WTC11 (cell line): ENCODE measurements at regions of chr1 and their contacts with region 1.

Region 1: GRCh38 chr1:41496080-41497055 is 11.9 kb upstream of the EDN2 start:
- DNase-seq: peak; percentile 85
- ATAC-seq: peak; percentile 65
- H3K4me3 Mint-ChIP-seq: peak overlapping the region; percentile 41
- H3K27ac Mint-ChIP-seq: no peak overlapping the region
- H3K4me1 Mint-ChIP-seq: peaks cover 24% of the 10 kb centered on the region
- H3K27me3 Mint-ChIP-seq: peaks cover 14% of the 10 kb centered on the region
- CTCF ChIP-seq: no peak

Region 2: GRCh38 chr1:41338820-41339219 is 157.5 kb before region 1 on chr1:
- CTCF ChIA-PET with region 1: no interaction called
- POLR2A ChIA-PET with region 1: no interaction called
- DNase-seq: no peak
- ATAC-seq: no peak
- H3K4me3 Mint-ChIP-seq: no peak overlapping the region
- H3K27ac Mint-ChIP-seq: no peak overlapping the region
- H3K4me1 Mint-ChIP-seq: peaks cover 6% of the 10 kb centered on the region
- H3K27me3 Mint-ChIP-seq: peaks cover 7% of the 10 kb centered on the region
- CTCF ChIP-seq: no peak

Region 3: GRCh38 chr1:41474490-41475271 is 21.7 kb before region 1 on chr1:
- CTCF ChIA-PET with region 1: interaction called, 10 read pairs
- POLR2A ChIA-PET with region 1: no interaction called
- DNase-seq: no peak
- ATAC-seq: peak; percentile 55
- H3K4me3 Mint-ChIP-seq: no peak overlapping the region
- H3K27ac Mint-ChIP-seq: peak overlapping the region; percentile 26; the same call in 1 of the 2 replicates
- H3K4me1 Mint-ChIP-seq: peaks cover 11% of the 10 kb centered on the region
- H3K27me3 Mint-ChIP-seq: no peaks in the 10 kb centered on the region
- CTCF ChIP-seq: no peak

Region 4: GRCh38 chr1:41484372-41485241 is 11.8 kb before region 1 on chr1 and contains the start of gene EDN2:
- CTCF ChIA-PET with region 1: interaction called, 29 read pairs
- POLR2A ChIA-PET with region 1: interaction called, 3 read pairs
- DNase-seq: peak; percentile 55
- ATAC-seq: peak; percentile 65
- H3K4me3 Mint-ChIP-seq: no peak within 1 kb of the TSS
- H3K27ac Mint-ChIP-seq: no peak within 1 kb of the TSS
- H3K4me1 Mint-ChIP-seq: peaks cover 44% of the 10 kb centered on the region
- H3K27me3 Mint-ChIP-seq: peaks cover 14% of the 10 kb centered on the region; the same call in 1 of the 2 replicates
- CTCF ChIP-seq: no peak
- total RNA-seq, gene EDN2: 0.33 to 0.39 TPM in 2 of 3 replicates, not detected in the other

Region 5: DNA sequence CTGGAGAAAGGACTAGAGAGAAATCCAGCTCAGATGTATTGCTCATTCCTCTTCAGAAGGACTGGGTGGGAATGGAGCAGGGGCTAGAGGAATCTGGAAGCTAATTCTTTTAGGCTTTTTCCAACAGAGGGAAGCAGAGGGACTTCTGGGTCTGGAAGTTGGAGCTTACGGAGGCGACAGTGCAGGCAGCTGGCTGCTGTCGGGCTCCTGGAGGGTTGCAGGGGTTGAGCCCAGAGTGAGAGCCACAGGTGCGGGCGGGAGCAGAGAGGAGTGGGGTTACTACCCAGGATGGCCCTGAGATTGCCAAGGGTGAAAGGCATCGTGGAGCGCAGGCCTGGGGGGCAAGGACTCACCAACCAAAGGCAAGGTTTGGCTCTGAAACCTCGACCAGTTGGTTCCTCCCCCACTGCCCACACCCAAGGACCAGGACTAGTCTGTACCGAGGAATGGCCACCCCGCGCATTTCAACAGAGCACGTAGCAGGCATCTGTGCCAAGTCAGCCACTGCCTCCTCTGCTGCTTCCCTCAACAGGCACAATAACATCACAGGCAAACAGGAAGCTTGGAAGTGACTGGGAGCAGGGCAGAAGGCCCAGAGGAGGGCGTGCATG is 10.8 kb after region 1 on chr1:
- CTCF ChIA-PET with region 1: interaction called, 57 read pairs
- POLR2A ChIA-PET with region 1: interaction called, 3 read pairs
- DNase-seq: no peak
- ATAC-seq: peak; percentile 64
- H3K4me3 Mint-ChIP-seq: no peak overlapping the region
- H3K27ac Mint-ChIP-seq: no peak overlapping the region
- H3K4me1 Mint-ChIP-seq: peaks cover 18% of the 10 kb centered on the region
- H3K27me3 Mint-ChIP-seq: no peaks in the 10 kb centered on the region
- CTCF ChIP-seq: no peak

Region 6: DNA sequence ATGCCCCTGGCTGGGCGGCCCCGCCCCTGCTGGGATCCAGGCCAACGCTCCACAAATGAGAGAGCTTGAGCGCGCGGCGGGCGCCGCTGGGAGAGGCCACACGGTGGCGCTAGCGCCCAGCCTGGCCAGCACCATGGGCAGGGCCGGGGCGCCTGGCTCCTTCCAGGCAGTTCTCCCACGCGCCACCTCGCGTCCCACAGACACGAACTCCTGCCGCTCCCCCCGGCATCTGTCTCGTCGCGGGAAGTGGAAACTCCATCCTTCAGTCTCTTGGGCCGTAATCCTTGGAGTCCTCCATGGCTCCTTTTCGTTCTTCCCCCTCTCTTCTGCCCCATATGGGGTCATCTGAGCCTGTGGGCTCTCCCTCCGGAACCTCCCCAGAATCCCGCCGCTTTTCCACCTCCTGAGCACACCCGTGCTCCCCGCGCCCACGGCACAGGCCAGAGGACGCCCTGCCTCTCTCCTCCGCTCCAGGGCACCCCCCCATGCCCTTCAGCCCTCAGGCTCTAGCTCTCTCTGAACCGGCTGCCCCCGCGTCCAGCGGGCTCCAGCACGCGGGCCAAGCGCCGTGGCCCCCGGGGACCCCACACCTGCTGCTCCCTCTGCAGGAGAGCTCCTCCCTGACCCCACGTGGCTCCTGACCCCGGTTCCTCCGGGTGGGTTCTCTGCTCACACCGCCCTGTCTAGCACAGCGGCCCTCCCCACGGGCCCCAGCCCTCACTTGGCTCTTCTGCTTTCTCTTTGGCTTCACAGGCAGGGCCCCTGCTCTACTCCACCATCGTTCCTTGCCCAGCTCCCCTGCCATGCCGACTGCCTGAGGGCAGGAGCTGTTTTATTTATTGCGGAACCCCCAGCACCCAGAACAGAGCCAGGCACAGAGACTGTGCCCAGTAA is 20.0 kb after region 1 on chr1:
- CTCF ChIA-PET with region 1: interaction called, 57 read pairs
- POLR2A ChIA-PET with region 1: no interaction called
- DNase-seq: peak; percentile 90
- ATAC-seq: peak; percentile 85
- H3K4me3 Mint-ChIP-seq: peak overlapping the region; percentile 63
- H3K27ac Mint-ChIP-seq: no peak overlapping the region
- H3K4me1 Mint-ChIP-seq: peaks cover 12% of the 10 kb centered on the region
- H3K27me3 Mint-ChIP-seq: peaks cover 15% of the 10 kb centered on the region
- CTCF ChIP-seq: peak; percentile 60; the same call in 1 of the 2 replicates